Naive thymus-derived CD4-positive, alpha-beta T cell (primary cell): ENCODE measurements at regions of chr3 and their contacts with region 1.

Region 1: DNA sequence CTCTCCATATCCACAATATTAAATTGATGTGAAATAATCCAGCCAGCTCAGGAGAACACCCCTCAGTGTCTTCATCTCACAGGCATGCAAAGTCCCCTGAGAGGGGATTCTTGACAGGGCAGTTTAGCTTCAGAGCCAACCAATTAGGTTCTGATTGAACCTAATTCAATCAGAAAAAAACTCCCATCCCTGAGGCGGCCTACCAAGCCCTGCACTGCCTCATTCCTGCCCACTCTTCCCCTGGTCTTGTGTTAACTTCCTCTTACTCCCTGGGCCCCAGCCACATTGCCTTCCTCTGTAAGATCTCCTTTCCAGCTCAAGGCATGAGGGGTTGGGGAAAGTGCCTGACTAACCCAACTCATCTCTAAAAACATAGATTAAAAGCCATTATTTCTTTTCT is 46.1 kb downstream of the FRMD4B start:
- DNase-seq: no peak
- ATAC-seq: peak; percentile 61
- H3K4me3 ChIP-seq: no peak overlapping the region
- H3K4me3 Mint-ChIP-seq: no peak overlapping the region
- H3K27ac ChIP-seq: no peak overlapping the region
- H3K27ac Mint-ChIP-seq: no peak overlapping the region
- H3K4me1 ChIP-seq: no peaks in the 10 kb centered on the region
- H3K4me1 Mint-ChIP-seq: peaks cover 0 to 4% (median 0%) of the 10 kb centered on the region in 7 donors
- H3K27me3 ChIP-seq: no peaks in the 10 kb centered on the region
- H3K27me3 Mint-ChIP-seq: peaks cover 0 to 5% (median 0%) of the 10 kb centered on the region in 5 donors

Region 2: DNA sequence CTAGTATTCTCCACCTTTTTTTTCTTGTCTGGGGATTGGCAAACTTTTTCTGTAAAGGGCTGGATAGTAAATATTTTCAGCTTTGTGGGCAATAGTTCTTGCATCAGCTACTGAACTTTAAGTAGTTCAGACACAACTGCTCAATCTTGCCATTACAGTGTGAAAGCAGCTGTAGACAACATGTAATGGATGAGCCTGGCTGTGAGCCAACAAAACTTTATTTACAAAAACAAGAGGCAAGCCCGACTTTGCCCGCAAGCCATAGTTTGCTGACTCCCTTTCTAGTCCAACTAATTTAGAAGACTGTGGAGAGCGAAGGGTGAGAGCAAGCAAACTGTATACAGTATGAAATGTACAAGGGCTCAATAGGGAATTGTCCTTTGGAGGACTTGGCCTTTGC is 39.9 kb after region 1 on chr3:
- CTCF ChIA-PET with region 1: no interaction called
- POLR2A ChIA-PET with region 1: no interaction called
- intact Hi-C with region 1: loop called in 1 of 2 experiments (anchors 5 kb)
- DNase-seq: no peak
- ATAC-seq: no peak
- H3K4me3 ChIP-seq: no peak overlapping the region
- H3K4me3 Mint-ChIP-seq: no peak overlapping the region
- H3K27ac ChIP-seq: no peak overlapping the region
- H3K27ac Mint-ChIP-seq: no peak overlapping the region
- H3K4me1 ChIP-seq: no peaks in the 10 kb centered on the region
- H3K4me1 Mint-ChIP-seq: peaks cover 0 to 4% (median 0%) of the 10 kb centered on the region in 7 donors
- H3K27me3 ChIP-seq: peaks cover 0 to 4% of the 10 kb centered on the region in 2 donors
- H3K27me3 Mint-ChIP-seq: peaks cover 5 to 58% (median 11%) of the 10 kb centered on the region in 5 donors

Region 3: GRCh38 chr3:69659180-69659910 is 319.6 kb after region 1 on chr3:
- CTCF ChIA-PET with region 1: no interaction called
- POLR2A ChIA-PET with region 1: no interaction called
- intact Hi-C with region 1: no loop called
- DNase-seq: no peak
- ATAC-seq: no peak
- H3K4me3 ChIP-seq: no peak overlapping the region
- H3K4me3 Mint-ChIP-seq: no peak overlapping the region
- H3K27ac ChIP-seq: no peak overlapping the region
- H3K27ac Mint-ChIP-seq: no peak overlapping the region
- H3K4me1 ChIP-seq: no peaks in the 10 kb centered on the region
- H3K4me1 Mint-ChIP-seq: no peaks in the 10 kb centered on the region
- H3K27me3 ChIP-seq: no peaks in the 10 kb centered on the region
- H3K27me3 Mint-ChIP-seq: no peaks in the 10 kb centered on the region